H1 (cell line): ENCODE measurements at regions of chr1 and their contacts with region 1.

Region 1: DNA sequence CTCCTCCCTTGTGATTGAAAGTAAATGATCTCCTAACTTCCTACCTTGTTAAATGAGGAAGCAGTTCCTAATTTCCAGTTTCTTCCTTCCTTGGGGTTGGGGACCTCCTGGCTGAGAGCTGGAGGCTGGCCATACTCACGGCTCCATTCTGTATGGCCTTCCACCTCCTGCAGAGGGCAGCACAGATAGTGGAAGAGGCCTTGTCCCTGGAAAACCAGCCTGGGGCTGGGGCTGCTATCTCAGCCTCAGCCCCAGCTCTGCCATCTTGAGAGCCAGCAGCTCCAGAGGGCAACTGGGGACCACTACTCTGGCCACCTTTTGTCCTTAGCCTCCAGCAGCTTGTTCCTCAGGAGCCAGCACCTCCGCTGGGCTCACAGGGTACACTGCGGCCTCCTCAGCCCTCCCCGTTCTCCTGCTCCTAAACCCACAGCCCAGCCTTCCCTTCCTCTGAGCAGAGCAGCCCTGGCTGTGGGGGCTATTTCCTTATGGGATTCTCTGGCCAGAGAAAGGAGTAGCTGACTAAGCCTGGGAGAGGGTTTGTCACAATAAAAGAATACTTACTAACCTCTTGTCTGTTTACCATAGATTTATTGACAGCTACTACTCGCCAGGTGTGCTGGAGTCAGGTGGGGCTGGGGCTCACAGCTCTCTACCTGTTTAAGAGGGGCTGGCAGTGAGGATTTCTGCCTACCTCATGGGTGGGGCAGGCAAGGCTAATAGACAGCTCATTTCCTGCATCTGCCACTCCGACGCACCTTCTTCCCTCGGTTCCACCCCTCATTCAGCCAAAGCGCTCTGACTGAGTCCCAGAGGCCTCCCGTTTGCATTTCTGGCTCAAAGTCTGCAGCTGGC is 6.3 kb downstream of the TMEM234 start:
- DNase-seq: peak in 1 of 2 experiments; percentile 79
- H3K4me3 ChIP-seq: no peak overlapping the region
- H3K27ac ChIP-seq: no peak overlapping the region
- H3K4me1 ChIP-seq: no peaks in the 10 kb centered on the region
- H3K27me3 ChIP-seq: no peaks in the 10 kb centered on the region
- CTCF ChIP-seq: peak; percentile 86 to 91 (median 86)
- EP300 ChIP-seq: no peak
- POLR2A ChIP-seq: no peak
- RAD21 ChIP-seq: peak; percentile 76 to 87

Region 2: DNA sequence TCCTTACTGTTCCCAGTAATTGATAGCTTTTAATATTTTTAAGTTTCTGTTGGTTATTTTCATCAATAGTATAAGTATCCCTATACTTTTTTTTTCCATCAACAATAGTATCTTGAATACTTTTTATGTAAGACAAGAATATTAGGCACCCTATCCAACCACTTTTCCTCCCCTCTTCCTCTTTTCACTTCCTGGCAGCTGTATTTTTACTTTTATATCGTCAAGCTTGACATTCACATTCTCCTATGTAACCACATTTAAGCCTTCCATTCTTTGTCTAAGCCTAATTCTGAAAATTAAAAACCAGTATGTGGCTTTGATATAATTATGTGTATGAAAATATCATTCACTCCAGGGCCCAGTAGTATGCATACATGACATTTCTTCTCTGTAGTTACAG is 133.8 kb before region 1 on chr1:
- CTCF ChIA-PET with region 1: no interaction called
- POLR2A ChIA-PET with region 1: no interaction called
- DNase-seq: no peak
- H3K4me3 ChIP-seq: no peak overlapping the region
- H3K27ac ChIP-seq: no peak overlapping the region
- H3K4me1 ChIP-seq: no peaks in the 10 kb centered on the region
- H3K27me3 ChIP-seq: no peaks in the 10 kb centered on the region
- CTCF ChIP-seq: no peak
- EP300 ChIP-seq: no peak
- POLR2A ChIP-seq: no peak
- RAD21 ChIP-seq: no peak

Region 3: DNA sequence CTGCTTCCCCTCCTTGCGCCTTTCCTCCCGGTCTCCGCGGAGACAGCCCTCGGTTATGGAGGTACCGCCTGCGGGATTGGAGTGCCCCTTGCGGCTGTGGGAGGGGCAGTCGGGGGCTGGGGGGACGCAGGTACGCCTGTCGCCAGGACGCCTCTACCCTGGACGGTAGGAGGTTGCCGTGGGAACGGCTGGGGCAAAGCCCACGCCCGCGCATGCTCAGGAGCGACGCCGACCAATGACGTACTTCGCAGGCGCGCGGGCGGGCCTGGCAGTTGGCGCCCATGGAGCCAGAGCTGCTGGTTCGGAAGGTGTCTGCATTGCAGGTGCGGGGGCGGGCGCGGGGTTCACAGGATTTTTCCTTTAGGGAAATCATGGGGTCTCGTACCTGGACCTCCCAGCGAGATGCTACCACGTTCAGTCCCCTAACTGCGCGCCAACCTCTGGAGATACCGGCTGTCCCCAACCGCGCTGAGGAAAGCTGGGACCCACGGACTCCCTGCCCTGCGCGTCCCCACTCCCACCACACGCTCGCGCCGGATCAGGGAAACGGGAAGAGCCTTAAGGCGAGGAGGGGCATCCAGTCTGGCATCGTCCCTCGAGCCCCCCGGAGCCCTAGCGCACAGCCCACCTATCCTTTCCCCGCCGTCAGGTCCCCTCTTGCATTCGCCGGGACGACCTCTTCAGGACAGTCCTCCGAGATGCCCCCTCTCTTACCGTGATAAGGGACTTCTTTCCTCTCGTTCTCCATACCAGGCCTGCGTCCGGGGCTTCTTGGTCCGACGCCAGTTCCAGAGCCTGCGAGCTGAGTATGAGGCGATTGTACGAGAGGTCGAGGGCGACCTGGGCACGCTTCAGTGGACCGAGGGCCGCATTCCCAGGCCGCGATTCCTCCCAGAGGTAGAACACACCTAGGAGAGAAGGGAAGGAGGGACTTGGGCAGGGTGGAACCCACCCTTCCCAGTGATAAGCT is 10.2 kb before region 1 on chr1 and contains the start of gene IQCC:
- CTCF ChIA-PET with region 1: interaction called, 25 read pairs
- POLR2A ChIA-PET with region 1: interaction called, 91 read pairs
- DNase-seq: peak; percentile 81 to 93
- H3K4me3 ChIP-seq: peak within 1 kb of the TSS; percentile 64 to 86 (median 80)
- H3K27ac ChIP-seq: peak within 1 kb of the TSS; percentile 51; the same call in 1 of the 2 replicates
- H3K4me1 ChIP-seq: peaks cover 0 to 21% (median 10%) of the 10 kb centered on the region in 4 experiments; a peak in 6 of 7 replicates
- H3K27me3 ChIP-seq: peaks cover 0 to 4% (median 2%) of the 10 kb centered on the region in 4 experiments; a peak in 3 of 7 replicates
- CTCF ChIP-seq: peak in 2 of 3 experiments; percentile 31 to 43; a peak in 2 of 4 replicates
- EP300 ChIP-seq: 0 out of 3 replicates have a peak, but pooled peaks of 1 of the 2 experiments have one; percentile 25
- POLR2A ChIP-seq: peak in 1 of 2 experiments; percentile 90; a peak in 2 of 3 replicates
- RAD21 ChIP-seq: peak; percentile 46 to 49
- total RNA-seq, gene IQCC: 4.2 and 4.3 TPM in 2 replicates

Region 4: DNA sequence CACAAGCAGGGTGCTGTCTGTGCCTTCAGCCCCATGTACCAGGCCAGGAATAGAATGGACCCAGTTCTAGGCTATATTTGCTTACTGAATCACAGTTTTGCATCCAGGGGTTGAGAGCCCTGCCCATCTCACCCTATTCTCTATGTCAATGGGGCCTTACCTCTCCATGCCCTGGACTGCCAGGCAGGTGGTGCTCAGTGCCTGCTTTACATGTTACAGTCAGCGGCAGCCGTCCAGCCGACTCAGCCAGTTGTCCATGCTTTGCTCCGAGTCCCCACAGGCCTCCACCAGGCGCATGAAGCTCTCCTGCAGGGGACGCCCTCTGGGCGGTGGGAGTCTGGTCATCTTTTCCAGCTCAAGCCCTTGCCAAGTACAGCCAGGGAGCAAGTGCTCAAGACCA is 18.9 kb after region 1 on chr1:
- CTCF ChIA-PET with region 1: interaction called, 70 read pairs
- POLR2A ChIA-PET with region 1: interaction called, 52 read pairs
- DNase-seq: no peak
- H3K4me3 ChIP-seq: no peak overlapping the region
- H3K27ac ChIP-seq: no peak overlapping the region
- H3K4me1 ChIP-seq: peaks cover 0 to 2% (median 0%) of the 10 kb centered on the region in 4 experiments; a peak in 1 of 7 replicates
- H3K27me3 ChIP-seq: no peaks in the 10 kb centered on the region
- CTCF ChIP-seq: no peak
- EP300 ChIP-seq: no peak
- POLR2A ChIP-seq: no peak
- RAD21 ChIP-seq: peak in 1 of 2 experiments; percentile 23; a peak in 1 of 4 replicates

Region 5: GRCh38 chr1:32247983-32248889 is 32.4 kb after region 1 on chr1:
- CTCF ChIA-PET with region 1: interaction called, 70 read pairs
- POLR2A ChIA-PET with region 1: interaction called, 8 read pairs
- DNase-seq: peak; percentile 83 to 97
- H3K4me3 ChIP-seq: peak overlapping the region; percentile 1 to 55 (median 14); a peak in 4 of 8 replicates
- H3K27ac ChIP-seq: no peak overlapping the region
- H3K4me1 ChIP-seq: peaks cover 6 to 13% (median 8%) of the 10 kb centered on the region in 4 experiments
- H3K27me3 ChIP-seq: no peaks in the 10 kb centered on the region; a peak in 1 of 7 replicates
- CTCF ChIP-seq: peak; percentile 81 to 98 (median 96)
- EP300 ChIP-seq: no peak
- POLR2A ChIP-seq: no peak
- RAD21 ChIP-seq: peak; percentile 64 to 71

Region 6: DNA sequence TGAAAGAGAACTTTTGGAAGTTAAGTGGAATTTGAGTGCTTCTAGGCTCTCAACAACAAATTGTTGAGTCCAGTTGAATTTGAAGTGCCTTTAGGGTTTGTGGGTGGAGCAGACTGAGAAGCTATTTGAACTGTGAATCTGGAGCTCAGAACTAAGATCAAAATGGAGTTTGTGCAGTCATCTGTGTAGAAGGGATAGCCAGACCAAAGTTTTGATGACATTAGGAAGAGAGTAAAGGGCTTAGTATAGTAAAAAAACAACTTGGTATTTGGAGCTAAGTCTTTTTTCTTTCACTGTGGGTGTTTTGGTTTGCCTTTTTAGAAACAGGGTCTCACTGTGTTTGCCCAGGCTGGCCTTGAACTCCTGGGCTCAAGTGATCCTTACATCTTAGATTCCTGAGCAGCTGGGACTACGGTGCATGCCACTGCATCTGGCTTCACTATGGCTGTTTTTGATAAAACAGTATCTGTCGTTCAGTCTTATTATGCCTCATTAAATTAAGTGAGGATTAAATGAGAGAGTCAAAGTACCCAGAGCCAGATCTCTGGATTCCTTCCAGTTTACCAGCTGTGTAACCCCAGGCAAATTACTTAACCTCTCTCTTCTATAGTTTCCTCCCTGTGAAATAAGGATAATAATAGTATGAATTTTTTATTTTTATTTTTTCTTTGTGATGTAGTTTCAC is 96.0 kb after region 1 on chr1:
- CTCF ChIA-PET with region 1: interaction called, 57 read pairs
- POLR2A ChIA-PET with region 1: interaction called, 3 read pairs
- DNase-seq: no peak
- H3K4me3 ChIP-seq: no peak overlapping the region
- H3K27ac ChIP-seq: no peak overlapping the region
- H3K4me1 ChIP-seq: no peaks in the 10 kb centered on the region
- H3K27me3 ChIP-seq: no peaks in the 10 kb centered on the region
- CTCF ChIP-seq: no peak
- EP300 ChIP-seq: no peak
- POLR2A ChIP-seq: no peak
- RAD21 ChIP-seq: no peak

Region 7: GRCh38 chr1:32335790-32336590 is 120.1 kb after region 1 on chr1 and contains the start of gene MARCKSL1:
- CTCF ChIA-PET with region 1: interaction called, 5 read pairs
- POLR2A ChIA-PET with region 1: interaction called, 33 read pairs
- DNase-seq: peak; percentile 27 to 94
- H3K4me3 ChIP-seq: peak within 1 kb of the TSS; percentile 92 to 94 (median 93)
- H3K27ac ChIP-seq: peak within 1 kb of the TSS; percentile 92
- H3K4me1 ChIP-seq: peaks cover 5 to 34% (median 25%) of the 10 kb centered on the region in 4 experiments
- H3K27me3 ChIP-seq: peaks cover 0 to 7% (median 2%) of the 10 kb centered on the region in 4 experiments; a peak in 4 of 7 replicates
- CTCF ChIP-seq: no peak
- EP300 ChIP-seq: no peak
- POLR2A ChIP-seq: peak in 1 of 2 experiments; percentile 98; a peak in 2 of 3 replicates
- RAD21 ChIP-seq: no peak
- total RNA-seq, gene MARCKSL1: 536 and 557 TPM in 2 replicates

Region 8: DNA sequence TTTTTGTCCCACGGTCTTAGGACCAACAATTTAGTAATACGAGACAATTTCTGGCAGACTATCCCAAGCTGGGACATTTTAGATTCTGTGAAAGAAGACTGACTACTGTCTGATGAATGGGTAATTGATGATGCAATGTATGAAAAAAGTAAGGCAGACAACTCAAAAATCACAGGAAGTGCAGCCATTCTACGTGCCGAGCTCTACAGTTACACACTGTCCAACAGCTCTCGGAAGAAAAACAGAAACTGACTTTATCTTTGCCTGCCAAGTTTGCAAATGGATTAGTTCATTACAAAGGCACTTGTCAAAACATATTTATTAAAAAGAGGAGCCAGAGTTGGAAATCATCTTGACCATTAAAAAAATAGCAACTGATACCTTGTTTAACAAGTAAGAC is 280.3 kb after region 1 on chr1:
- CTCF ChIA-PET with region 1: no interaction called
- POLR2A ChIA-PET with region 1: no interaction called
- DNase-seq: no peak
- H3K4me3 ChIP-seq: no peak overlapping the region
- H3K27ac ChIP-seq: no peak overlapping the region
- H3K4me1 ChIP-seq: peaks cover 3% of the 10 kb centered on the region in 4 experiments; a peak in 5 of 7 replicates
- H3K27me3 ChIP-seq: no peaks in the 10 kb centered on the region
- CTCF ChIP-seq: no peak
- EP300 ChIP-seq: no peak
- POLR2A ChIP-seq: no peak
- RAD21 ChIP-seq: no peak